ENCODE measurements at regions of chr13 and their contacts with region 1.

Region 1: GRCh38 chr13:60654415-60654814 is 257.4 kb downstream of the TDRD3 start:
- DNase-seq: peak; percentile 67
- H3K4me3 ChIP-seq: no peak overlapping the region
- H3K27ac ChIP-seq: no peak overlapping the region
- H3K4me1 ChIP-seq: no peaks in the 10 kb centered on the region
- H3K27me3 ChIP-seq: no peaks in the 10 kb centered on the region
- CTCF ChIP-seq: peak; percentile 88

Region 2: GRCh38 chr13:59607780-59608233 is 1046.6 kb before region 1 on chr13:
- CTCF ChIA-PET with region 1: no interaction called
- POLR2A ChIA-PET with region 1: no interaction called
- intact Hi-C with region 1: no loop called
- DNase-seq: no peak
- H3K4me3 ChIP-seq: no peak overlapping the region
- H3K27ac ChIP-seq: no peak overlapping the region
- H3K4me1 ChIP-seq: no peaks in the 10 kb centered on the region
- H3K27me3 ChIP-seq: no peaks in the 10 kb centered on the region
- CTCF ChIP-seq: no peak

Region 3: DNA sequence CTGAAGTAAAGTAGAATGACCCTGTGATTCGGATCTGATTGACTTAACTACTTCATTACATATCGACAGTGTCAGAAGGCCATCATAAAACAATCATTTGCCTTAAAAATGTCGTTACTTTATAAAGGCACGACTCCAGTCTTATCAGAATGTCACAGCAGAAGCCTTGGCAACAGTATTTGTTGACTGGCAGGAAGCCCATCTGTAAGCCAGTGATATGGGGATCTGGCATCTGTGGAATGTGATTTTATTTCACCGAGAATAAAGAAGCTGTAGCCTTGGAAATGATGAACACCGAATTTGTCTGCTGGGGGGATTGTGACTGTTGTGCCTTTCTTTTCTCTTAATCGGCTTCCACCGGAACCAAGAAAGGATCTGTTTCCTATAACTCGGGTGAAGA is 105.1 kb after region 1 on chr13:
- CTCF ChIA-PET with region 1: no interaction called
- POLR2A ChIA-PET with region 1: no interaction called
- intact Hi-C with region 1: loop called (anchors 5 kb)
- DNase-seq: peak; percentile 86
- H3K4me3 ChIP-seq: no peak overlapping the region
- H3K27ac ChIP-seq: no peak overlapping the region
- H3K4me1 ChIP-seq: peaks cover 38% of the 10 kb centered on the region
- H3K27me3 ChIP-seq: no peaks in the 10 kb centered on the region
- CTCF ChIP-seq: no peak

Region 4: DNA sequence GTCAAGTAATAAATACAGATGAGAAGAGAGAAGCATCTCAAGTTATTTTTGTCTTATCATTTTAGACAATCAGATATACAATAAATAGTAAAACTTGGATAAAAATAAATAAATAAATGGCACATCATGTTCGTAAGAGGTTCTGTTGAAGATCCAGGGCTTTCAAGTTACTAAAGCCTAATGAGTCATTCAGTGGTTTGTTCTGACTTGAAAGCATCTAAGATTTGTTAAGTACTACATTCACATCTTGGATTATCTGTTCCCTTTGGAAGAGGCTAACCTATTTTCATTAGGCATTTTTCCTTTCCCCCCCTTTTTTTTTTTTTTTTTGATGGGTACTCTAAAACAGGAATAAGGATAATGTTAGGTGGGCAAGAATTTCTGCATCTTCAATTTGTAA is 331.9 kb after region 1 on chr13:
- CTCF ChIA-PET with region 1: no interaction called
- POLR2A ChIA-PET with region 1: no interaction called
- intact Hi-C with region 1: loop called (anchors 10 kb)
- DNase-seq: no peak
- H3K4me3 ChIP-seq: no peak overlapping the region
- H3K27ac ChIP-seq: no peak overlapping the region
- H3K4me1 ChIP-seq: no peaks in the 10 kb centered on the region
- H3K27me3 ChIP-seq: no peaks in the 10 kb centered on the region
- CTCF ChIP-seq: no peak

Region 5: DNA sequence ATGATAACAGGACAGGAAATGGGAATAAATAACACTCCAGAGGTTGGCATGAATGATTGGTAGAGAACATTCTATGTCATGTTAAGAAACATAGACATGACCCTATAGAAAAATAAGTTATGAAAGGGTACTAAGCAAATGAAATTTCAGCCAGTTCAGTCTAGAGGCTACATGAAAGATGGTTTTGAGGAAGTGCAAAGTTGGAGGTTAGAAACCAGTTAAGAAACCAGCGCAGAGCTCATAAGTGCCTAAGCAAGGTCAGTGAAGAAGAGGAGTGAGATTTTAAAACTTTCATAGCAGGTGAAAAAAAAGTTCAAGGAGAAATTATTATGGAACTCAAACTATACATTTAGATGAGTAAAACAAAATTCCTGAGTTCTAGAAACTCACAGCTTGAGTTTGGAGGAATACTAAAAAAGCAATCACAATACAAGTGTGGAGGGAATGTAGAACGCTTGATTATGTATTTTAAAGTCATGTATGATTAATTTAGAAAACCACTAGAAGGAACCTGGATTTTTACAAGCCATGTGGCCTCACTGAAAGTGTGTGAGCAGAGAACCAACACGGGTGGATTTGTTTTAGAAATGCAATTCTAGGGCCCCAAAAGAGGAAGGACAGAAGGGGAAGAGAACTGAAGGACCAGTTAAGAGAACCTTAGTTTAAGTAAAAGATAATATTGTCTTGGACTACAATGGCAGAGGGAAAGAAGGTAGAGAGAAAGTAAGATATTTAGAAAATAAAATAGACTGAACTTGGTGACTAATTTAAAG is 598.9 kb after region 1 on chr13:
- CTCF ChIA-PET with region 1: no interaction called
- POLR2A ChIA-PET with region 1: no interaction called
- intact Hi-C with region 1: loop called (anchors 5 kb)
- DNase-seq: no peak
- H3K4me3 ChIP-seq: no peak overlapping the region
- H3K27ac ChIP-seq: no peak overlapping the region
- H3K4me1 ChIP-seq: peaks cover 15% of the 10 kb centered on the region
- H3K27me3 ChIP-seq: no peaks in the 10 kb centered on the region
- CTCF ChIP-seq: no peak

Region 6: DNA sequence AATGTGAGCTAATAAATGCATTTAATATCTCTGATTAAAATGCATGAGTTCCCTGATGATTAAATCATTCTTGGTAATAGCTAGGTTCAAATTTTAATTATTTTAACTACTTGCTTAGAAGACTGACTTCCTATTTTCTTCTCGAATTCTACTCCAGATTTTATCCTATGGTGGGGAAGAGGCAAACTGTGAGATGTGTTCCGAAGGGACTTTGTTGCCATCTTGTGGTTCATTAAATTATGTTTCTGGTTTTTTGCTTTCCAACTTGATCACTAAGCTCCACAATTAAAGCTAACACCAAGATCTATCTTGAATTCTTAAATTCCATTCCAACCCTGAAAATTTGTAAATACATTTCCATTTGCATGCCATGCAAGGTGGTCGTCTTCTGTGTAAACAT is 1299.7 kb after region 1 on chr13:
- CTCF ChIA-PET with region 1: no interaction called
- POLR2A ChIA-PET with region 1: no interaction called
- intact Hi-C with region 1: loop called (anchors 10 kb)
- DNase-seq: peak; percentile 67
- H3K4me3 ChIP-seq: no peak overlapping the region
- H3K27ac ChIP-seq: no peak overlapping the region
- H3K4me1 ChIP-seq: no peaks in the 10 kb centered on the region
- H3K27me3 ChIP-seq: no peaks in the 10 kb centered on the region
- CTCF ChIP-seq: peak; percentile 57

Measured in A673 (cell line).